OCI-LY7 (cell line): ENCODE measurements at regions of chr14 and their contacts with region 1.

Region 1: GRCh38 chr14:75982266-75983018 is 647 bp upstream of the TGFB3 start:
- DNase-seq: peak; percentile 78
- H3K4me3 ChIP-seq: peak overlapping the region; percentile 76
- H3K27ac ChIP-seq: no peak overlapping the region
- H3K4me1 ChIP-seq: peaks cover 42% of the 10 kb centered on the region
- CTCF ChIP-seq: peak; percentile 70

Region 2: GRCh38 chr14:75906676-75907280 is 75.7 kb before region 1 on chr14:
- CTCF ChIA-PET with region 1: interaction called, 12 read pairs
- POLR2A ChIA-PET with region 1: interaction called, 5 read pairs
- intact Hi-C with region 1: loop called (anchors 1 kb)
- DNase-seq: peak; percentile 76
- H3K4me3 ChIP-seq: no peak overlapping the region
- H3K27ac ChIP-seq: no peak overlapping the region
- H3K4me1 ChIP-seq: no peaks in the 10 kb centered on the region
- CTCF ChIP-seq: peak; percentile 99

Region 3: DNA sequence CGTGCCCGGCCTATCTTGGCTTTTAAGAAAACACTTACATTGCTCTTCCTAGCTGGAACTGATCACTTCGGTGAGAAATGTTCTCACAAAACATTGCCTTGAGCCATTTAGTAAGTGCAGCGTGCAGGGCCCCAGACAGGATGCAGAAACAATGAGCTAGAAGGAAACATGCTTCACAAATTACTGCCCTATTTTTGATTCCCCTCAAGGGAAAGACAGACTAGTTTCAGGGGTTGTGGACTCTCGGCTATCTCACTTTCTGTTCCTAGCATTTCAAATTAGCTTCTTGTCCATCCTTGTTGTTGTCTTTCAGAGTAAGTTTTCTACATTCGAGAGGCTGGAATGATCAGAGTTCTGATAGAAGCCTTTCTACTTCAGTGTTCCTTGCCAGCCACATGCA is 22.2 kb before region 1 on chr14:
- CTCF ChIA-PET with region 1: no interaction called
- POLR2A ChIA-PET with region 1: no interaction called
- intact Hi-C with region 1: loop called (anchors 2 kb)
- DNase-seq: peak; percentile 85
- H3K4me3 ChIP-seq: peak overlapping the region; percentile 45
- H3K27ac ChIP-seq: peak overlapping the region; percentile 85
- H3K4me1 ChIP-seq: peaks cover 32% of the 10 kb centered on the region
- CTCF ChIP-seq: no peak

Region 4: DNA sequence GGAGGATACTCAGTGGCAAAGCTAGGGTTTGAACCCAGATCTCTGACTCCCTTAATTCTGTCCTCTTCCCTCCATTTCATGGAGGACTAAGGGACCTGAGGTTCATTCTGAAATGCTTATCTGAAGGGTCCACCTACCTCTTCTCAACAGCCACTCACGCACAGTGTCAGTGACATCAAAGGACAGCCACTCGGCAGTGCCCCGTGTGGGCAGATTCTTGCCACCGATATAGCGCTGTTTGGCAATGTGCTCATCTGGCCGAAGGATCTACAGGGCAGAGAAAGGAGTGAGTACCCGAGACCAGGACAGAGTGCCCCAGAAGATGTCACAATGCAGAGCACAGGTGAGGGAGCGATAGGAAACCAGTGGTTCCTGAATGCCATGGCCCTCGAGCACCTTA is 11.5 kb before region 1 on chr14:
- CTCF ChIA-PET with region 1: no interaction called
- POLR2A ChIA-PET with region 1: no interaction called
- intact Hi-C with region 1: no loop called
- DNase-seq: no peak
- H3K4me3 ChIP-seq: no peak overlapping the region
- H3K27ac ChIP-seq: no peak overlapping the region
- H3K4me1 ChIP-seq: peaks cover 14% of the 10 kb centered on the region
- CTCF ChIP-seq: no peak